ENCODE measurements at regions of chr2 and their contacts with region 1.

Region 1: GRCh38 chr2:175690113-175690837 is 311.8 kb downstream of the LNPK start:
- DNase-seq: peak in 1 of 2 experiments; percentile 15
- H3K4me3 ChIP-seq: no peak overlapping the region
- H3K27ac ChIP-seq: no peak overlapping the region
- H3K4me1 ChIP-seq: no peaks in the 10 kb centered on the region
- H3K27me3 ChIP-seq: no peaks in the 10 kb centered on the region
- CTCF ChIP-seq: peak in 2 of 3 experiments; percentile 60 to 62; a peak in 3 of 4 replicates
- EP300 ChIP-seq: no peak
- POLR2A ChIP-seq: no peak
- RAD21 ChIP-seq: peak; percentile 86 to 88

Region 2: DNA sequence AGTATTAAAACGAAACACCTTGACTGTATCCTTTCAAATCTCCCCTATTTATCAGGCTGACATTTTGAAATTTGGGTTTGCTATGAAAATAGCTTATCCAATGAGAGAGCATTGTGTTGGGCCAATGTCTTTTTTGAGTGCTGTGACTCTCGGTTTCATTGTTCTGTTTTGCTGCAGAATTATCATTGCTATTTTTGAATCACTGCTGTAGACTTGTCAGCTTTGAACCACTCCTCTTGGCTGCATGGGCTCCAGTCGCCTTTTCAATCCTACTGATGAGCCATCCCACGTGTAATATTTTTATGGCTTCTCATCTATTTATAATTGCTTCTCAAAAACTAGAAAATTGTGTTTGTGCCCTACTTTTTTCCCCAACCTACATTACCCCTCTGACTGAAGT is 11.0 kb before region 1 on chr2:
- CTCF ChIA-PET with region 1: interaction called, 16 read pairs
- POLR2A ChIA-PET with region 1: no interaction called
- DNase-seq: no peak
- H3K4me3 ChIP-seq: no peak overlapping the region
- H3K27ac ChIP-seq: no peak overlapping the region
- H3K4me1 ChIP-seq: no peaks in the 10 kb centered on the region
- H3K27me3 ChIP-seq: no peaks in the 10 kb centered on the region
- CTCF ChIP-seq: no peak
- EP300 ChIP-seq: no peak
- POLR2A ChIP-seq: no peak
- RAD21 ChIP-seq: no peak

Region 3: GRCh38 chr2:176013440-176013839 is 323.2 kb after region 1 on chr2:
- CTCF ChIA-PET with region 1: interaction called, 10 read pairs
- POLR2A ChIA-PET with region 1: no interaction called
- DNase-seq: no peak
- H3K4me3 ChIP-seq: no peak overlapping the region
- H3K27ac ChIP-seq: no peak overlapping the region
- H3K4me1 ChIP-seq: no peaks in the 10 kb centered on the region
- H3K27me3 ChIP-seq: no peaks in the 10 kb centered on the region
- CTCF ChIP-seq: no peak
- EP300 ChIP-seq: no peak
- POLR2A ChIP-seq: no peak
- RAD21 ChIP-seq: no peak

Region 4: GRCh38 chr2:176079831-176080539 is 389.7 kb after region 1 on chr2:
- CTCF ChIA-PET with region 1: interaction called, 39 read pairs
- POLR2A ChIA-PET with region 1: no interaction called
- DNase-seq: peak in 1 of 2 experiments; percentile 92
- H3K4me3 ChIP-seq: peak overlapping the region; percentile 4 to 54 (median 20); a peak in 6 of 8 replicates
- H3K27ac ChIP-seq: no peak overlapping the region
- H3K4me1 ChIP-seq: peaks cover 0 to 29% (median 11%) of the 10 kb centered on the region in 4 experiments; a peak in 5 of 7 replicates
- H3K27me3 ChIP-seq: peaks cover 85 to 98% (median 92%) of the 10 kb centered on the region in 4 experiments
- CTCF ChIP-seq: peak in 2 of 3 experiments; percentile 83 to 99; a peak in 3 of 4 replicates
- EP300 ChIP-seq: no peak
- POLR2A ChIP-seq: no peak
- RAD21 ChIP-seq: peak; percentile 61 to 78